GM10248 (cell line): ENCODE measurements at regions of chr4 and their contacts with region 1.

Region 1: GRCh38 chr4:95371476-95372224 is 177.1 kb downstream of the UNC5C start:
- DNase-seq: no peak
- CTCF ChIP-seq: no peak

Region 2: GRCh38 chr4:95415346-95415771 is 43.7 kb after region 1 on chr4:
- CTCF ChIA-PET with region 1: no interaction called
- POLR2A ChIA-PET with region 1: no interaction called
- DNase-seq: no peak
- CTCF ChIP-seq: no peak

Region 3: DNA sequence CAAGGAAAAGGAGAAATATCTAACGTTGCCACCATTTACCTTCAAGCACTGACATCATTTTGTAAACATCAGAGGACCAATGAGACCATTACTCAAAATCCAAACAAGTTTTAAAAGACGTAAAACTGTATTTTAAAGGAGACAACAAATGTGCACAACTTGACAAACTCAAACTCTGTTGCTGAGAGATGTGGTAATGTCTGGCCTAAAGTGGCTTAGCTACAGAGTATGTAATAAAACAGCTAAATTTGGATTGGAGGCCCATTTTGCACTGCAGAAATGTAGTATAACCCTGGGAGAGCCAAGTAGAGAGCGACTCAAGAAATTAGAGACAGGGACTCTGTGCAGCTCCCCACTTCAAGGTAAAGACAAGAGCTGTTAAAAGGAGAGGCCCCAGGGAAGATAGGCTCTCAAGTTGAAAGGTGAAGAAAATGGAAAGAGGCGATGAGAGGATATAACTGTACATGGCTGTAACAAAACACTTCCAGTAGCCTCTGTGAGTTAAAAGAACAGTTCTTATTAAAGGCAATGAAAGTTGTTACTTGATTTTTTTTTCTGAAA is 156.8 kb after region 1 on chr4:
- CTCF ChIA-PET with region 1: no interaction called
- POLR2A ChIA-PET with region 1: interaction called, 10 read pairs
- DNase-seq: no peak
- CTCF ChIP-seq: no peak